ENCODE measurements at regions of chr20 and their contacts with region 1.

Region 1: GRCh38 chr20:38057351-38057972 is 23.9 kb downstream of the RPRD1B start:
- DNase-seq: peak; percentile 74
- CTCF ChIP-seq: peak; percentile 79

Region 2: DNA sequence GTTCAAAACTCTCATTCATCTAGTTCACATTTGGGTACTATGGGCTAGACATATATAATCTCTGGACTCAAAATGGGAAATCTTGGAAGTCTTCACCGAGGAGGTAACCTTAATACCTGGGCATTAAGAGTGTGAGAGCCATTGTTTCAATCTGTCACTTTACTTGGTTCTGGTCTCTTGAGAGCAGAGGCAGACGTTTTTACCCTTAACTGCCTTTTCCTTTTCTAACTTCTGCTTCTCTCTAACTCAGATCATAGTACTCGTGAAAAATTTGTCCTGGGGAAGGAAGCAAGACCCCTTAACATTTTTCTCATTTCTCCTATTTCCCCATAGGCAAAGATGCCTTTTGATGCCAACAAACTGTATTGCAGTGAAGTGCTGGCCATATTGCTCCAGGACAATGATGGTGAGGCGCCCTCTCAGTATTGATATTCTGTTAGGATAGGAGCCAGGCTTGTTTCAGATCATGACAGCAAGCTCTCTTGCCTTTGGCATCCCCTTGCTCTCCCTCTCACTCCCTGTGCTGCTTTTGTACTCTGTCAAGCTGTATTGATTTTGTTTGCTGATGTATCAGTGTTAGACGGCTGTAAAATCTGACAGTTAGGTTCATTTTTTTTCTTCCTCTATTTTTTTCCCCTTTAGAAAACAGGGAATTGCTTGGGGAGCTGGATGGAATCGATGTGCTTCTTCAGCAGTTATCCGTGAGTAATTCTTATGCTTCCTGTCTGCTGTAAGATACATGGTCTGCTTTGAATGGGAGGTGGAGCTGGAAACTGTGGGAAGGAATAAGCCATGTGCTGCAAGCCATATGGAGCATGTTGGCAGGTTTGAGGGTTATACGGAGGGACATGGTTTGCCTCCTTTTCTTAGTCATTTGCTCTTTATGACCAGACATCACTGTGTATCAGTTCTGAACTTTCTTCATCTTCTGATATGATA is 280.2 kb before region 1 on chr20:
- CTCF ChIA-PET with region 1: no interaction called
- POLR2A ChIA-PET with region 1: no interaction called
- DNase-seq: no peak
- CTCF ChIP-seq: no peak

Region 3: GRCh38 chr20:38043512-38044300 is 13.8 kb before region 1 on chr20:
- CTCF ChIA-PET with region 1: interaction called, 14 read pairs
- POLR2A ChIA-PET with region 1: no interaction called
- DNase-seq: no peak
- CTCF ChIP-seq: no peak